Activated CD4-positive, alpha-beta T cell treated with anti-CD3 and anti-CD28 coated beads, Interleukin-2, amount 10 ng/mL, durations not matched to agents 24 days and 14 days (primary cell): ENCODE measurements at regions of chr3 and their contacts with region 1.

Region 1: GRCh38 chr3:100737334-100737733 is 28.0 kb downstream of the TFG start:
- DNase-seq: no peak
- H3K4me3 Mint-ChIP-seq: no peak overlapping the region
- H3K27ac Mint-ChIP-seq: no peak overlapping the region
- H3K4me1 Mint-ChIP-seq: peaks cover 13% of the 10 kb centered on the region
- H3K27me3 Mint-ChIP-seq: no peaks in the 10 kb centered on the region

Region 2: GRCh38 chr3:100650651-100651611 is 86.4 kb before region 1 on chr3:
- intact Hi-C with region 1: no loop called
- DNase-seq: peak; percentile 73
- H3K4me3 Mint-ChIP-seq: peak overlapping the region; percentile 58
- H3K27ac Mint-ChIP-seq: peak overlapping the region; percentile 75
- H3K4me1 Mint-ChIP-seq: peaks cover 12% of the 10 kb centered on the region
- H3K27me3 Mint-ChIP-seq: peaks cover 2% of the 10 kb centered on the region

Region 3: DNA sequence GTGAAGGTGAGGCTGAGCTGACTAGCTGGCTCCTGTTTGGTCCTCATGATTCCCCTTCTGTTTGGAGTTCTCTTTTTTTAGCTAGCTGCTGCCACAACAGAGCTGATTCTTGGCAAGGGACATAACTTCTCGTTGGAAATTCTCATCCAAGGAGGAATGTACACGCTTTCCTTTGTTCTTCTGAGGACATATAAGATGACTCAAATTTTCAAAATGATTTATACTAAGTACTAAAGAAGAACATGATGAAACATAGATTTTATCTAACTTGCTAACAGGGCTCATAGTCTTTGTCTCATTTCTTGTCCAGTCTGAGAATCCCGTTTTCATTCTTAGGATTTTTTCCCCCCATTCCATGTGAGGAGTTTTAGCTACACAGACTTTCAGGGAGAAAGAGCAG is 31.0 kb before region 1 on chr3:
- intact Hi-C with region 1: no loop called
- DNase-seq: no peak
- H3K4me3 Mint-ChIP-seq: no peak overlapping the region
- H3K27ac Mint-ChIP-seq: no peak overlapping the region
- H3K4me1 Mint-ChIP-seq: peaks cover 19% of the 10 kb centered on the region
- H3K27me3 Mint-ChIP-seq: peaks cover 4% of the 10 kb centered on the region

Region 4: DNA sequence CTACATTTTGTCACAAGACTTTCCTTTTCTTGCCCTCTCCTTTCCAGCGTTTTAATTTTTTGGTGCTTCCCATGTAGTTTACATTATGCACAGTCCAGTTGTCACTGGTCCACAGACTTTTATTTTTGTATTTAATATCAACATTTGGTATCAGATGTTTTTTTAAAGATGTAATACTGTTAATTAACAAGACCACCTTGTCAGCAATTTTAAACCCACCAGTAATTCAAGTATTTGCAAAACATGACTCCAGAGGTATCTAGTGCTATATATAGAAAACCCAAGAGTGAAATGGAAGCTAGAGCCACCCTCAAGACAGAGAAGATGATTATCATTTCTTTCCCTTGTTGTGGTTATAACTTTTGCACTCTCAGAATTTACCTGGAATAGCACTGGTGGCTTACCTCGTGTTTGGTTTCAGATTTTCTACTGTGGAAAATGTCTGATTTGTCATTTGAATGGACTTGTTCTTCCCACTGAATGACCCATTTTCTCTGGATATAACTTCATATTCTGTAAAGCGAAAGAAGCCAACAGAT is 28.2 kb after region 1 on chr3:
- intact Hi-C with region 1: loop called (anchors 2 kb)
- DNase-seq: no peak
- H3K4me3 Mint-ChIP-seq: no peak overlapping the region
- H3K27ac Mint-ChIP-seq: no peak overlapping the region
- H3K4me1 Mint-ChIP-seq: peaks cover 12% of the 10 kb centered on the region
- H3K27me3 Mint-ChIP-seq: no peaks in the 10 kb centered on the region